Tibial artery (tissue), 4 donors: ENCODE measurements at regions of chr2 and their contacts with region 1.

Region 1: DNA sequence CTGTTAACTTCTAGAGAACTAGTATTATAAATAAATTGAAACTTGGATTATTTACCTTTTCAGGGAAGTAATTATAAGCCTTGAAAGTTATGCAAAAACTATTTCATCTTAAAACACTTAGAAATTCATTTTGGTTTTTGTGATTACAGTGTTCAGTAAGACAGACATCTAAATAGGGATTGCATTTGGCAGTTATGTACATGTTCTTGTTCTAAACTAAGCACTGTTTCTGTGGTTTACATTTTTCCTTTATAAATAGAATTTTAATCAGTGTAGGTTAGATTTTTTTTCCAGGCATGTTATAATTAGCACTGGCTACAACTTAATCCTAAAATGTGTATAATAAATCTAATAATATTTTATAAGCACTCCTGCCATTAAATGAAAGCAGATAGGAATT is 35.0 kb downstream of the LCLAT1 start:
- DNase-seq: no peak
- H3K4me3 ChIP-seq: no peak overlapping the region
- H3K27ac ChIP-seq: peak overlapping the region in 1 of 2 donors; percentile 12
- H3K4me1 ChIP-seq: peaks cover 0 to 47% (median 11%) of the 10 kb centered on the region in 4 donors
- H3K27me3 ChIP-seq: no peaks in the 10 kb centered on the region
- CTCF ChIP-seq: no peak

Region 2: GRCh38 chr2:29923110-29923721 is 558.8 kb before region 1 on chr2:
- intact Hi-C with region 1: no loop called
- DNase-seq: peak in 1 of 2 donors; percentile 49
- H3K4me3 ChIP-seq: no peak overlapping the region
- H3K27ac ChIP-seq: no peak overlapping the region
- H3K4me1 ChIP-seq: peaks cover 0 to 27% (median 19%) of the 10 kb centered on the region in 4 donors
- H3K27me3 ChIP-seq: peaks cover 0 to 62% of the 10 kb centered on the region in 2 donors
- CTCF ChIP-seq: peak; percentile 49 to 78

Region 3: DNA sequence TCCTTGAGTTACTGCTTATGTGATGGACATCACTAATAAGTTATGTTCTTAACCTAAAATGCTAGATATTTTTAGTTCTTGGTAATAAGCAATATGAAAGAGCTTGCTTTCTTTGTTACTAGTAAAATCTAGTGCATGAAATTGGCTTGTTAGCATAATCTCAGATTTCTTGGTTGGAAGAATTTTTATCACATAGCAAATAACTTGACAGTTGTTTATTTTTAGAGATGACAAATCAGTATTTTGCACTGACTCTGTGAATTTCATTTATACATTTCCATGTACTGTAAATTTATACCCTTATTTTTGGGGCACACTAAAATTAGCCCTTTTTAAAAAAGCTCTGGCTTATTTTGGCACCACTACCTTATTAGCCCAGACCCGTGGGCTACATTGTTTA is 10.6 kb after region 1 on chr2:
- intact Hi-C with region 1: loop called (anchors 1 kb)
- DNase-seq: no peak
- H3K4me3 ChIP-seq: no peak overlapping the region
- H3K27ac ChIP-seq: peak overlapping the region in 1 of 2 donors; percentile 1
- H3K4me1 ChIP-seq: peaks cover 0 to 39% (median 11%) of the 10 kb centered on the region in 4 donors
- H3K27me3 ChIP-seq: no peaks in the 10 kb centered on the region
- CTCF ChIP-seq: no peak